CD8-positive, alpha-beta memory T cell (primary cell): ENCODE measurements at regions of chr1 and their contacts with region 1.

Region 1: GRCh38 chr1:155934097-155934935 is at the start of gene KHDC4:
- DNase-seq: peak; percentile 90 to 97 (median 96)
- H3K4me3 ChIP-seq: peak within 1 kb of the TSS; percentile 96
- H3K4me3 Mint-ChIP-seq: peak within 1 kb of the TSS in 2 of 7 donors; percentile 38 to 47
- H3K27ac ChIP-seq: peak within 1 kb of the TSS; percentile 97
- H3K27ac Mint-ChIP-seq: peak within 1 kb of the TSS in 3 of 8 donors; percentile 27 to 86 (median 61)
- H3K4me1 ChIP-seq: peaks cover 42% of the 10 kb centered on the region
- H3K4me1 Mint-ChIP-seq: peaks cover 9 to 34% (median 10%) of the 10 kb centered on the region in 3 donors
- H3K27me3 ChIP-seq: no peaks in the 10 kb centered on the region
- H3K27me3 Mint-ChIP-seq: no peaks in the 10 kb centered on the region
- total RNA-seq, gene KHDC4: 58.8 to 61.2 TPM

Region 2: GRCh38 chr1:155946633-155947219 is 12.4 kb after region 1 on chr1:
- CTCF ChIA-PET with region 1: interaction called, 6 read pairs
- POLR2A ChIA-PET with region 1: interaction called, 10 read pairs
- DNase-seq: no peak
- H3K4me3 ChIP-seq: no peak overlapping the region
- H3K4me3 Mint-ChIP-seq: peak overlapping the region; percentile 5 to 88 (median 53)
- H3K27ac ChIP-seq: peak overlapping the region; percentile 32
- H3K27ac Mint-ChIP-seq: peak overlapping the region; percentile 83 to 95 (median 90)
- H3K4me1 ChIP-seq: peaks cover 32% of the 10 kb centered on the region
- H3K4me1 Mint-ChIP-seq: peaks cover 23 to 44% (median 33%) of the 10 kb centered on the region in 3 donors
- H3K27me3 ChIP-seq: no peaks in the 10 kb centered on the region
- H3K27me3 Mint-ChIP-seq: no peaks in the 10 kb centered on the region

Region 3: GRCh38 chr1:155978325-155978972 is 44.1 kb after region 1 on chr1 and contains the start of gene ARHGEF2:
- CTCF ChIA-PET with region 1: interaction called, 15 read pairs
- POLR2A ChIA-PET with region 1: interaction called, 26 read pairs
- DNase-seq: peak; percentile 65 to 86 (median 72)
- H3K4me3 ChIP-seq: peak within 1 kb of the TSS; percentile 91
- H3K4me3 Mint-ChIP-seq: peak within 1 kb of the TSS; percentile 92 to 100 (median 98)
- H3K27ac ChIP-seq: peak within 1 kb of the TSS; percentile 94
- H3K27ac Mint-ChIP-seq: peak within 1 kb of the TSS; percentile 86 to 99 (median 96)
- H3K4me1 ChIP-seq: peaks cover 71% of the 10 kb centered on the region
- H3K4me1 Mint-ChIP-seq: peaks cover 74 to 86% (median 75%) of the 10 kb centered on the region in 3 donors
- H3K27me3 ChIP-seq: no peaks in the 10 kb centered on the region
- H3K27me3 Mint-ChIP-seq: no peaks in the 10 kb centered on the region
- total RNA-seq, gene ARHGEF2: 168 to 176 TPM

Region 4: GRCh38 chr1:155989242-155990004 is 55.1 kb after region 1 on chr1:
- CTCF ChIA-PET with region 1: interaction called, 44 read pairs
- POLR2A ChIA-PET with region 1: interaction called, 8 read pairs
- DNase-seq: peak; percentile 64 to 86 (median 70)
- H3K4me3 ChIP-seq: no peak overlapping the region
- H3K4me3 Mint-ChIP-seq: no peak overlapping the region
- H3K27ac ChIP-seq: no peak overlapping the region
- H3K27ac Mint-ChIP-seq: peak overlapping the region in 2 of 8 donors; percentile 56 to 71
- H3K4me1 ChIP-seq: peaks cover 11% of the 10 kb centered on the region
- H3K4me1 Mint-ChIP-seq: peaks cover 10 to 14% (median 10%) of the 10 kb centered on the region in 3 donors
- H3K27me3 ChIP-seq: no peaks in the 10 kb centered on the region
- H3K27me3 Mint-ChIP-seq: no peaks in the 10 kb centered on the region

Region 5: GRCh38 chr1:156019943-156020291 is 85.6 kb after region 1 on chr1:
- CTCF ChIA-PET with region 1: no interaction called
- POLR2A ChIA-PET with region 1: interaction called, 10 read pairs
- DNase-seq: no peak
- H3K4me3 ChIP-seq: peak overlapping the region; percentile 80
- H3K4me3 Mint-ChIP-seq: peak overlapping the region; percentile 93 to 100 (median 98)
- H3K27ac ChIP-seq: peak overlapping the region; percentile 49
- H3K27ac Mint-ChIP-seq: peak overlapping the region; percentile 76 to 99 (median 96)
- H3K4me1 ChIP-seq: peaks cover 14% of the 10 kb centered on the region
- H3K4me1 Mint-ChIP-seq: peaks cover 27 to 45% (median 44%) of the 10 kb centered on the region in 3 donors
- H3K27me3 ChIP-seq: no peaks in the 10 kb centered on the region
- H3K27me3 Mint-ChIP-seq: peaks cover 0 to under 1% of the 10 kb centered on the region in 2 donors